H1 (cell line): ENCODE measurements at regions of chr2 and their contacts with region 1.

Region 1: DNA sequence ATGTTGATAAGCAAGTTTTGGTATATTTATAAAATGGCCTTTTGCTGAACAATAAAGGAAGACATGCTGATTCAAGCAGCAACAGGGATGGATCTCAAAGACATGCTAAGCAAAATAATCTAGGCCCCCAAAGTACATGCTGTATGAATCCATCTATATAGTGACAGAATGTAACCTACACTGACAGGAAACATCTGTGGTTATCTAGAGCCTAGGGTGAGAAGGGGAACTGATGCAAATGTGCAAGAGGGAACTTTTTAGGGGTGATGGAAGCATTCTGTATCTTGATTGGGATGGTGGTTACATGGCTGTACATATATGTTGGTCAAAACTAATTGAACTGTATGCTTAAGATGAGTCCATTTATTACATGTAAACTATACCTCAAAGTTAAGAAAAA is 24.2 kb downstream of the CNRIP1 start:
- DNase-seq: no peak
- H3K4me3 ChIP-seq: no peak overlapping the region
- H3K27ac ChIP-seq: no peak overlapping the region
- H3K4me1 ChIP-seq: no peaks in the 10 kb centered on the region
- H3K27me3 ChIP-seq: no peaks in the 10 kb centered on the region
- CTCF ChIP-seq: no peak
- EP300 ChIP-seq: no peak
- POLR2A ChIP-seq: no peak
- RAD21 ChIP-seq: no peak

Region 2: DNA sequence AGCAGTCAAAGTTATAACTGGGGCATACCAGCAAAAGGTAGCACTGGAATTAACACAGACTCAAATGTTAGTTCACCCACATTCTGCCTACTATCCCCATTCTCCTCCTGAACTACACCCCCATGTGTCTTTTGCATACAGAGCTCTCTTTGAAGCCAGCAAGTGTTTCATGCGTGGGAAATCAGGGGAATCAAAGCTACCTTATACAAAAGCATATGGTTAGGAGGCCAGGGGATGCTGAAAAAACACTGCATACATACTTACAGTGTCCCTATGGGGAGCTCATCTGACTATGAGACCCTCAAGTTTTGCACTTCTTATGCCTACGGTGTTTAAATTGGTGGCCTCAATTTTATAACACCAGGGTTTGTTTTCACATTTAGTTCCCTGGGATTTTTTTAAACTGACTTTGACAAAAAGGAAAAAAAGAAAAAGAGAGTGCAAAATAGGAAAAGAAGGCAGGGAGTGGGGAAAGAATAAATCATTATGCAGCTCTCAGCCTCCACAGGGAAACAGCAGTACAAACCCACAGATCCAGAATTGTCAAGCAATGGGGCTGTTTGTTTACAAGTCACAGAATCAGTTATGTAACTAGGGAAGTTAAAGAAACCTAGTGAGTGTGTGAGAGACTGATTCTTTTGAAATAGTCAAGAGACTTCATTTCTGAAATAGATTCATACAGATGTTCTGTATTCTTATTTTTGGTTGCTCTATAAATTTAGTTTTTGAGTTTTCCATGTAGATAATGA is 23.1 kb before region 1 on chr2:
- CTCF ChIA-PET with region 1: interaction called, 25 read pairs
- POLR2A ChIA-PET with region 1: no interaction called
- DNase-seq: no peak
- H3K4me3 ChIP-seq: no peak overlapping the region
- H3K27ac ChIP-seq: no peak overlapping the region
- H3K4me1 ChIP-seq: peaks cover 0 to 3% (median under 1%) of the 10 kb centered on the region in 4 experiments; a peak in 1 of 7 replicates
- H3K27me3 ChIP-seq: no peaks in the 10 kb centered on the region
- CTCF ChIP-seq: no peak
- EP300 ChIP-seq: no peak
- POLR2A ChIP-seq: no peak
- RAD21 ChIP-seq: no peak

Region 3: GRCh38 chr2:68282811-68283418 is 12.6 kb before region 1 on chr2:
- CTCF ChIA-PET with region 1: interaction called, 108 read pairs
- POLR2A ChIA-PET with region 1: no interaction called
- DNase-seq: no peak
- H3K4me3 ChIP-seq: no peak overlapping the region
- H3K27ac ChIP-seq: no peak overlapping the region
- H3K4me1 ChIP-seq: no peaks in the 10 kb centered on the region
- H3K27me3 ChIP-seq: no peaks in the 10 kb centered on the region
- CTCF ChIP-seq: peak in 2 of 3 experiments; percentile 57 to 59; a peak in 3 of 4 replicates
- EP300 ChIP-seq: no peak
- POLR2A ChIP-seq: no peak
- RAD21 ChIP-seq: peak; percentile 66

Region 4: GRCh38 chr2:68319398-68320117 is 24.0 kb after region 1 on chr2 and contains the start of gene CNRIP1:
- CTCF ChIA-PET with region 1: interaction called, 12 read pairs
- POLR2A ChIA-PET with region 1: no interaction called
- DNase-seq: peak in 1 of 2 experiments; percentile 77
- H3K4me3 ChIP-seq: peak within 1 kb of the TSS; percentile 61 to 77 (median 76)
- H3K27ac ChIP-seq: no peak within 1 kb of the TSS
- H3K4me1 ChIP-seq: peaks cover 0 to 3% (median 0%) of the 10 kb centered on the region in 4 experiments; a peak in 1 of 7 replicates
- H3K27me3 ChIP-seq: peaks cover 0 to 32% (median 26%) of the 10 kb centered on the region in 4 experiments; a peak in 6 of 7 replicates
- CTCF ChIP-seq: no peak
- EP300 ChIP-seq: no peak
- POLR2A ChIP-seq: no peak
- RAD21 ChIP-seq: no peak
- total RNA-seq, gene CNRIP1: 4.6 and 5.7 TPM in 2 replicates

Region 5: GRCh38 chr2:68362069-68362468 is 66.6 kb after region 1 on chr2:
- CTCF ChIA-PET with region 1: interaction called, 10 read pairs
- POLR2A ChIA-PET with region 1: no interaction called
- DNase-seq: peak; percentile 38 to 76
- H3K4me3 ChIP-seq: no peak overlapping the region
- H3K27ac ChIP-seq: no peak overlapping the region
- H3K4me1 ChIP-seq: no peaks in the 10 kb centered on the region; a peak in 1 of 7 replicates
- H3K27me3 ChIP-seq: peaks cover 0 to 7% (median 3%) of the 10 kb centered on the region in 4 experiments; a peak in 3 of 7 replicates
- CTCF ChIP-seq: peak; percentile 77 to 92 (median 88)
- EP300 ChIP-seq: peak in 1 of 2 experiments; percentile 52; a peak in 1 of 3 replicates
- POLR2A ChIP-seq: no peak
- RAD21 ChIP-seq: peak; percentile 76 to 82

Region 6: GRCh38 chr2:68441179-68441993 is 145.9 kb after region 1 on chr2:
- CTCF ChIA-PET with region 1: interaction called, 19 read pairs
- POLR2A ChIA-PET with region 1: no interaction called
- DNase-seq: peak; percentile 29 to 79
- H3K4me3 ChIP-seq: no peak overlapping the region
- H3K27ac ChIP-seq: no peak overlapping the region
- H3K4me1 ChIP-seq: no peaks in the 10 kb centered on the region
- H3K27me3 ChIP-seq: no peaks in the 10 kb centered on the region
- CTCF ChIP-seq: peak; percentile 46 to 98 (median 92)
- EP300 ChIP-seq: no peak
- POLR2A ChIP-seq: no peak
- RAD21 ChIP-seq: peak; percentile 91 to 97